Colonic mucosa (tissue), 4 donors: ENCODE measurements at regions of chr6 and their contacts with region 1.

Region 1: GRCh38 chr6:114108119-114109002 is 137.4 kb upstream of the HDAC2 start:
- DNase-seq: peak; percentile 75
- H3K4me3 ChIP-seq: no peak overlapping the region
- H3K27ac ChIP-seq: no peak overlapping the region
- H3K4me1 ChIP-seq: no peaks in the 10 kb centered on the region
- H3K27me3 ChIP-seq: no peaks in the 10 kb centered on the region
- CTCF ChIP-seq: peak; percentile 37

Region 2: DNA sequence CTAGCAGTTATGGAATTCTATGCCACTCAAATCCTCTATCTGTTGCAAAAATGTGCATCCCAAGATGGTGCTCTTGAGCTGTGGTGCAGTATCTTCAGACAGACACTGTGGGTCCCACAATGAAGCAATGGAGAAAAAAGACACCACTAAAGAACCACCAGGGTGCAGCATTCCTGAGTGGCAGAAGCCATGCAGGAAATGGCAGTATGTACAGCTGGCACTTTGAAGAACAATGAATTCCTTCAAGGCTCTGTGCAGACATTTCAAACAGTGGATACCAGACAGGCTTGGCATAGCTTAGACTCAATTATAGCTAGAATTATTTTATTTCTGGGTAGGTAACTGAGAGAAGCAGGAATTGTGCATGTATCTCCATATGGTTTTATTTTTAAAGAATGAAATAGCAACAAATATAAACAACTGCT is 113.4 kb before region 1 on chr6:
- intact Hi-C with region 1: loop called (anchors 5 kb)
- DNase-seq: peak; percentile 55
- H3K4me3 ChIP-seq: no peak overlapping the region
- H3K27ac ChIP-seq: peak overlapping the region; percentile 10
- H3K4me1 ChIP-seq: no peaks in the 10 kb centered on the region
- H3K27me3 ChIP-seq: no peaks in the 10 kb centered on the region
- CTCF ChIP-seq: peak; percentile 37

Region 3: DNA sequence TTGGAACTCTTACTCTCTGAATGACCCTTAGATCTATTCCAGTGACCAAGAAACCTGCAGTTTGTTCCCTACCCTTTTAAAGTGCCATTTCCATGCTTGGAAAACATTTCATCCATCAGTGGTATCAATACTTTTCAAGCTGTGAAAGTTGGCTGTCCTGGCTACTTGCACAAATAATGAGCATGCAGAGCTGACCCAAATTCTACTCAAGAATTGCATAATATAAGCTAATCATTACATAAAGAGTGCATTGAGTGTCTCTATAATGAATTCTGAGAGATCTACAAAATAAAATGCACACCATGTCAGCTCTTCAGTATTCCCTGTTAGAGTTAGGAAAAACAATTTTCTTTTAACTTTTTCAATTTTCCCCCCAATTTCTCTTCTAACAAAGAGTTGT is 415.7 kb after region 1 on chr6:
- intact Hi-C with region 1: no loop called
- DNase-seq: no peak
- H3K4me3 ChIP-seq: no peak overlapping the region
- H3K27ac ChIP-seq: no peak overlapping the region
- H3K4me1 ChIP-seq: no peaks in the 10 kb centered on the region
- H3K27me3 ChIP-seq: no peaks in the 10 kb centered on the region
- CTCF ChIP-seq: no peak